Right lobe of liver (tissue), 6 donors: ENCODE measurements at regions of chr7 and their contacts with region 1.

Region 1: GRCh38 chr7:95723592-95724180 is 48.7 kb upstream of the DYNC1I1 start:
- DNase-seq: no peak
- ATAC-seq: peak; percentile 89 to 97 (median 93)
- H3K4me3 ChIP-seq: no peak overlapping the region
- H3K27ac ChIP-seq: no peak overlapping the region
- H3K4me1 ChIP-seq: peaks cover 0 to 6% (median 0%) of the 10 kb centered on the region in 4 donors
- H3K27me3 ChIP-seq: no peaks in the 10 kb centered on the region
- CTCF ChIP-seq: peak; percentile 47 to 65 (median 58)
- POLR2A ChIP-seq: no peak

Region 2: DNA sequence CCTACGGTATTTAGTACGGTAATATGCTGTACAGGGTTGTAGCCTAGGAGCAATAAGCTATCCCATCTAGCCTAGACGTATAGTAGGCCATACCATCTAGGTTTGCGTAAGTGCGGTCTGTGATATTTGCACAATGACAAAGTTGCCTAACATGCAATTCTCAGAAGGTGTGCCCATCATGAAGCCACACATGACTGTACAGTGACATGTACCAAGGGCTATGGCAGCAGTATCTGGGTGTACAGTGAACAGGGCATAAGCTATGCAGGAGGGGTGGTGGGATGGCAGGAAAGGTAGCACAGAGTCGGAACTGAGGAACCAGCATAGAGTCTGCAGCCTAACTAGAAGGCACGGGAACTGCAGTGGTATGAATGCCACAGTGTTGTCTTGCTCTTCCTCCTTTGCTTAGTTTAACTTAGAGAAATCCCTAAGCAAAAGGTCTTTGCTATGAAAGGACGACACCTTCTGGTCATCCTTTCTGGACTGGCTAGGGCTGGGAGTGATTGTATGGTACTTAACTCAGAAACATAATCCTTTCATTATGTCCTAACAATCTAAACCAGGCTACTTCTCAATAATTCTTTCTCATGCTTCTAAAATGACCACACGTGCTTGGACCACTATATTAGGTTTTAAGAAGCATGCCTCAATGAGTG is 142.2 kb after region 1 on chr7:
- intact Hi-C with region 1: loop called in 1 of 2 experiments (anchors 10 kb)
- DNase-seq: no peak
- ATAC-seq: no peak
- H3K4me3 ChIP-seq: no peak overlapping the region
- H3K27ac ChIP-seq: no peak overlapping the region
- H3K4me1 ChIP-seq: no peaks in the 10 kb centered on the region
- H3K27me3 ChIP-seq: no peaks in the 10 kb centered on the region
- CTCF ChIP-seq: peak in 2 of 4 donors; percentile 5 to 10
- POLR2A ChIP-seq: no peak